H1 (cell line): ENCODE measurements at regions of chr9 and their contacts with region 1.

Region 1: DNA sequence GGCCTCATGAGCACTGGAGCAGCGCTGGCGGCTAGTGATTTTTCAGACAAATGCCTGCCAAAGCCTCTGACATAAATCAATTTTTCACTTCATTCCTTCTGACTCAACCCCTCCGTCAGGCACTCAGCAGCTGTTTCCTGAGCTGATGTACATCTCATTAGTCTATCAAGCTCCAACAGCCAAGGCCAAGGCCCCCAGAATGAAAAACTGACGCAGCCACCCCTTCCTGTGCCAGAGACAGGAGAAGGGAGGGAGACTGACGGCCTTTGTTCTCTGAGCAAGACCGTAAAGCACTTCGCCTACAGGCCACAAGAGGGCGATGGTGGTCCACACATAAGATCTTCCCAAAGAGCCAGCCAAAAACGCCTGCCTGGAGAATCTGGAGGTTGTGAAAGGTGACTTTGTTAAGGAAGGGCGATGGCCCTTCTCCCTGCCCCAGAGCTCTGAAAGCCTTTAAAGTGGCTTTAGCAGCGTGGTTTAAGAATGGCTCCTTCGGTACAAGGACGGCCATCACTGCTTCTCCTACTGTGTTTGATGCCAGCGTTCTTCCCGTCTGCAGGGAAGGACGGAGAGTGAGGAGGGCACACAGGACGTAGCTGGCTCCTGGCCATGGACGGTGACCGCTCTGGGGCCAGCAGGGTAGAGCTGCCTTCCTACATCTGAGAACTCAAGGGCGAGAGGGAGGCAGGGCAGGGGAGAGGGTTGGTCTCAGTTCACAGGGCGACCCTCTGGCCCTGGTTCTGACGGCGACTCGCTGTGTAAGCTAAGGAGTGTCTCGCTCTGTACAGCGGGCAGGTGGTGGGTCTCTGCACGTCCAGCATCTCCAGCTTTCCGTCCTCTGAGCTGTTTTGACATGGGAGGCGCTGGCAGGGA is 37.0 kb downstream of the ALG2 start:
- DNase-seq: peak; percentile 81 to 90
- H3K4me3 ChIP-seq: no peak overlapping the region
- H3K27ac ChIP-seq: no peak overlapping the region
- H3K4me1 ChIP-seq: peaks cover 0 to 3% (median 1%) of the 10 kb centered on the region in 4 experiments; a peak in 2 of 7 replicates
- H3K27me3 ChIP-seq: no peaks in the 10 kb centered on the region
- CTCF ChIP-seq: peak; percentile 81 to 97 (median 81)
- EP300 ChIP-seq: no peak
- POLR2A ChIP-seq: no peak
- RAD21 ChIP-seq: peak; percentile 93 to 95

Region 2: GRCh38 chr9:99104459-99105151 is 80.1 kb before region 1 on chr9 and contains the start of gene TGFBR1:
- CTCF ChIA-PET with region 1: no interaction called
- POLR2A ChIA-PET with region 1: no interaction called
- DNase-seq: peak; percentile 80 to 95
- H3K4me3 ChIP-seq: peak within 1 kb of the TSS; percentile 69 to 92 (median 82)
- H3K27ac ChIP-seq: peak within 1 kb of the TSS; percentile 51; the same call in 1 of the 2 replicates
- H3K4me1 ChIP-seq: peaks cover 0 to 3% (median 2%) of the 10 kb centered on the region in 4 experiments; a peak in 3 of 7 replicates
- H3K27me3 ChIP-seq: no peaks in the 10 kb centered on the region; a peak in 1 of 7 replicates
- CTCF ChIP-seq: peak in 1 of 3 experiments; percentile 3; a peak in 1 of 4 replicates
- EP300 ChIP-seq: no peak
- POLR2A ChIP-seq: peak; percentile 90 to 94; a peak in 2 of 3 replicates
- RAD21 ChIP-seq: peak in 1 of 2 experiments; percentile 9; a peak in 1 of 4 replicates
- total RNA-seq, gene TGFBR1: 51.7 and 52.4 TPM in 2 replicates

Region 3: DNA sequence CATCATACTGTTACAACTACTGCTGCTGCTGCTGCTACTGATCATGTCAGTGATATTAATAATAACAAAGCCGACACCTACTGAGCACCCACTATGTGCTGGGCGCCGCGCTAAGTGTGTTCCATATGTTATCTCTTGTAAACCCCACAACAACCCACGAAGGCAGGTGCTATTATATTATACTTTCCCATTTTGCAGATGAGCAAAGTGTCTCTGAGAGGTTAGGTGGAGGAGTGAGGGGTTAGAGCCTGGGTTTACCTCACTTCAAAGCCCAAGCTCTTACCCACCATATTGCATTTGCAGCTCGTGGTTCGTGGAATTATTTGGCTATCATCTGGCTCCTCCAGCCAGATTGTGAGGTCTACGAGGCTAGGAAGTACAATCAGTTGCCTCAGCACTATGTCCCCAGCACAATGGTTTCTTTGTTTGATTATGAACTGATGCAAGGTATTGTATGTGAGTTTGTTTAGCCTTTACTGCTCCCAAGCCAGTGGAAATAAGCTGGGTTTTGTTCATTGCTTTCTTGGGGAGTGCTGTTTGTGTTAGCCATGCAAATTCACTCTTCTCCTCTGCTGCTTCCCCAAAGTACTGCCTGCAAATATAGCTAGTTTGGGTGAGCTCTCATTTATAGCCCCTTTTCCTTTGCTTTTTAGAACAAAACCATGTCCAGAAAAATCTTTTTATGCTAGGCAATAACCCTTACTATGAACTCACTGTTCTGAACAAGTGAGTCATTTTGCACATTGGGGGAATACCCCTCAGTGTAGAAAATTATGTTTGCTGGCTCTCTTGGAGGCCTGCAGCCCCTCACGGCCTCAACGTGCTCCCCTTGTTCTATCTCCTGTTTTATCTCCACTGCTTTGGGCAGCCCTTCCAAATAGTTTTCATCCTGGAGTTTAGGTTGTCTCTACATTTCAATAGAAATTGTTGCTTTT is 10.9 kb before region 1 on chr9:
- CTCF ChIA-PET with region 1: interaction called, 41 read pairs
- POLR2A ChIA-PET with region 1: interaction called, 3 read pairs
- DNase-seq: no peak
- H3K4me3 ChIP-seq: no peak overlapping the region
- H3K27ac ChIP-seq: no peak overlapping the region
- H3K4me1 ChIP-seq: peaks cover 9 to 22% (median 17%) of the 10 kb centered on the region in 4 experiments
- H3K27me3 ChIP-seq: no peaks in the 10 kb centered on the region; a peak in 1 of 7 replicates
- CTCF ChIP-seq: no peak
- EP300 ChIP-seq: no peak
- POLR2A ChIP-seq: no peak
- RAD21 ChIP-seq: no peak

Region 4: GRCh38 chr9:99221621-99222415 is 37.1 kb after region 1 on chr9 and contains the starts of genes ALG2 and SEC61B:
- CTCF ChIA-PET with region 1: interaction called, 11 read pairs
- POLR2A ChIA-PET with region 1: interaction called, 7 read pairs
- DNase-seq: peak; percentile 87 to 95
- H3K4me3 ChIP-seq: peak within 1 kb of the TSS; percentile 73 to 98 (median 92)
- H3K27ac ChIP-seq: peak within 1 kb of the TSS; percentile 99
- H3K4me1 ChIP-seq: peaks cover 0 to 3% (median 2%) of the 10 kb centered on the region in 4 experiments; a peak in 4 of 7 replicates
- H3K27me3 ChIP-seq: no peaks in the 10 kb centered on the region
- CTCF ChIP-seq: no peak
- EP300 ChIP-seq: no peak
- POLR2A ChIP-seq: peak; percentile 93 to 99
- RAD21 ChIP-seq: no peak
- total RNA-seq, gene ALG2: 27.8 and 30.7 TPM in 2 replicates
- total RNA-seq, gene SEC61B: 155 and 163 TPM in 2 replicates

Region 5: DNA sequence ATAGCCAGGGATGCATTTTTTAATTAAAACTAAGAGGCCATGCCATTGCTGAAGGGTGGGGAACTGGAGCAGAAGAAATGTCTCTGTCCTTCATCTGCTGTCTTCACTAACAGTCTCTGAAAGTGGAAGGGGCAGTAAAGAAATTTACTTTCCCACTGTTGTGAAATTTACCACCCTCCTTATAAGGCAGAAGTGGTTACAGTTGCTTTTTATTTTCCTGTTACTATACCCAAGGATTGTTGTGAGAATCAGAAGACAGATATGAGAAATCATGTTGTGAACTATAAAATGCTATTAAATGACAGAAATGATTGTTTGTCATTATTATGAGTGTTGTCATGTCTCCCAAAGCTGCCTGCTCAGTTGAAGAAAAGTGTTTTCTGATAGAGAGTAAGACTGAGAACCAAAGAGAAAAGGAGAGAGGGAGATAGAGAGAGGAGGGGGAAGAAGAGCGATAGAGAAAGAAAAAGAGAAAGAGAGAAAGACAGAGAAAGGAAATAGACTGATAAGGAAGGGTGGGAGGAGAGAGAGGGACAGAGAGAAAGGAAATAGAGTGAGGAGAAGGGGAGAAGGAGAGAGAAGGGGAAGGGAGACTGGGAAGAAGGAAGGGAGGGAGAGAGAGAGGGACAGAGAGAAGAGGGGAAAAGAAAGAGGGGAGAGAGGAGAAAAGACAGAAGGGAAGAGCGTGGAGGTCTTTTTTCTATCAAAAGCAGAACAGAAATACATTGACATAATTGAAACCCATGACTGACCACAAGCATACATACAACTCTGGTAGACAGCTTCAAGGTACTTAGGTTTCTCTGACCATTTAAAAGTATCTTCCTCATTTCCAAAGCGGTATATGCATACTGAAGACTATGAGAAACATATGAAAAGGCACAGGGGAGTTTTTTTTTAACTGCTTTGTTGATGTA is 59.9 kb after region 1 on chr9:
- CTCF ChIA-PET with region 1: interaction called, 10 read pairs
- POLR2A ChIA-PET with region 1: no interaction called
- DNase-seq: no peak
- H3K4me3 ChIP-seq: no peak overlapping the region
- H3K27ac ChIP-seq: no peak overlapping the region
- H3K4me1 ChIP-seq: no peaks in the 10 kb centered on the region
- H3K27me3 ChIP-seq: no peaks in the 10 kb centered on the region
- CTCF ChIP-seq: no peak
- EP300 ChIP-seq: no peak
- POLR2A ChIP-seq: no peak
- RAD21 ChIP-seq: no peak

Region 6: GRCh38 chr9:99385814-99386279 is 201.1 kb after region 1 on chr9:
- CTCF ChIA-PET with region 1: no interaction called
- POLR2A ChIA-PET with region 1: no interaction called
- DNase-seq: no peak
- H3K4me3 ChIP-seq: no peak overlapping the region
- H3K27ac ChIP-seq: no peak overlapping the region
- H3K4me1 ChIP-seq: no peaks in the 10 kb centered on the region
- H3K27me3 ChIP-seq: no peaks in the 10 kb centered on the region
- CTCF ChIP-seq: no peak
- EP300 ChIP-seq: no peak
- POLR2A ChIP-seq: no peak
- RAD21 ChIP-seq: no peak